Endothelial cell of umbilical vein (primary cell): ENCODE measurements at regions of chr3 and their contacts with region 1.

Region 1: DNA sequence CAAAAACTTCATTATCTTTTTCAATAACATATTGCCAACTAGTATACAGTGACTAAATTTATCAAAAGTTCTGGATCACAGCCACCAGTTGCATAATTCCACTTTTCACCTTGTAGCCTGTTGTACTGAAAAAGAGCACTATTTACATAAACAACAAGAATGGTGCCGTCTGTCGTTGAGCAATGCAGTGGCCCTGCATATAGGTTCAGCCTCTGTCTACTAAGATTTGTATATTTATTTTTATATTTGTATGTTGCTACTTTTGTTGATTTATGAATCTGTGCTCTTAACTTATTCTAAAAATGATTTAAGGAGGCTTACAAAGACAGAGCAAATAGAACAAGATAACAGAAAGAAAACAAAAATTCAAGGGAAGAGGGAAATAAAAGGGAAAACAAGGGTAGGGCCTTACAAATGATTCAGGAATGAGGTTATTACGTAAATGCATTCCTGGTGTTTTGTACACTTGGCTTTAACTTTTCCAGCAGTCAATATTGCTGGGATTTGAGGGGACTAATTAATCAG is 257.6 kb upstream of the STT3B start:
- DNase-seq: peak; percentile 56
- H3K4me3 ChIP-seq: no peak overlapping the region
- H3K27ac ChIP-seq: peak overlapping the region; percentile 42
- H3K4me1 ChIP-seq: peaks cover 38% of the 10 kb centered on the region
- H3K27me3 ChIP-seq: no peaks in the 10 kb centered on the region
- CTCF ChIP-seq: no peak
- POLR2A ChIP-seq: no peak

Region 2: GRCh38 chr3:31004025-31004678 is 270.9 kb before region 1 on chr3:
- CTCF ChIA-PET with region 1: no interaction called
- POLR2A ChIA-PET with region 1: no interaction called
- dilution Hi-C with region 1: no loop called
- intact Hi-C with region 1: loop called (anchors 2 kb)
- DNase-seq: peak; percentile 72
- H3K4me3 ChIP-seq: no peak overlapping the region
- H3K27ac ChIP-seq: peak overlapping the region; percentile 85
- H3K4me1 ChIP-seq: peaks cover 15% of the 10 kb centered on the region
- H3K27me3 ChIP-seq: no peaks in the 10 kb centered on the region
- CTCF ChIP-seq: no peak
- POLR2A ChIP-seq: no peak

Region 3: DNA sequence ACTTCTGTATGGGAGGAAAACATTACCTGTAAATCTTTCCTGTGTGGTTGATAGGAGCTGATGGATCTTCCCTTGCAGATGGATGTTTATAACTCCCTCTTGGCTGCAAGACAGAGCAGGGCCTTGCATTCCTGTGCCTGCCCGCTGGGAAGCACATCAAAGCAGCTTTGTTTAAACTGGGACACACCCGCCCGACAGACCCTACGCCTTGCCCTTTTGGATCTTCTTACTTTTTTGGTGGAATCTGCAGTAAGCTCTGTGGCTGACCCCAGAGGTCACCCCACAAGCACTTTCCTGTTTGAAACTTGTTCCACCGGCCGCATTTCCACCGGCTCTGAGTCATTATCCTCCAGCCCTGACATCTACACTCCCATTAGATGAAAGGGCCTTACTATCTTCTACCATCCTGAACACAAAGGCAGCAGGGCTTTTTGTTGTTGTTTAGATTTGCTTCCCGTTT is 13.6 kb after region 1 on chr3:
- CTCF ChIA-PET with region 1: interaction called, 10 read pairs
- POLR2A ChIA-PET with region 1: no interaction called
- dilution Hi-C with region 1: no loop called
- intact Hi-C with region 1: no loop called
- DNase-seq: peak; percentile 86
- H3K4me3 ChIP-seq: no peak overlapping the region
- H3K27ac ChIP-seq: no peak overlapping the region
- H3K4me1 ChIP-seq: peaks cover 13% of the 10 kb centered on the region
- H3K27me3 ChIP-seq: no peaks in the 10 kb centered on the region
- CTCF ChIP-seq: no peak
- POLR2A ChIP-seq: no peak